Natural killer cell (primary cell): ENCODE measurements at regions of chr5 and their contacts with region 1.

Region 1: DNA sequence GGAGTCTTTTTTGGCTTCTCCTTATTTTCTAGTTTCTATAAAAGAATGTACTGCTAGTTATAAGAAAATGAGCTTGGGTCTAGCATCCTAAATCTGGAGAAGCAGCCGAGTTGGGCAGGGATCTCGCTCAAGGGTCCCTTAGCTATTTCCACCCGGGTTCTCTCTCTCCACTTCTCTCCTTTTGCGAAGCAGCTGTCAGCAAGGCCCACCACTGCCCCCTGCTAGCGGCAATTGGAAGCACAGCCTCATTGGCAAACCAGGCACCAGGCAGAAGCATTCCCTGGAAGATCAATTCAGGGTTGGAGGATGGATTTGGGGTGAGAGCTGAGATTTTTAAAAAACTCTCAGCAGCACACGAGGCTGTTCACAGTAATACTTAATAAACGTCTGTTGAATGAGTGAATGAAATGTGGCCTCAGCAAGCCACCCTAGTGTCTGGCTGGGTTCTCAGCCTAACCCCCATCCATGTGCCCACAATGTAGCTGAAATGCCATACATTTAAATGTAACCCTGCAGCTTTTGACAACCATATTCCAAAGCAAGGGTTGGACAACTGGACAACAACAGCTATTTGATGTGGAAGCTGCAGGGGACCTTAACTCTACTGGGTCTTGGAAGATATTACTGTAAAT is 34.6 kb upstream of the TNIP1 start:
- DNase-seq: peak; percentile 68 to 84
- ATAC-seq: peak; percentile 85 to 98 (median 93)
- H3K4me3 ChIP-seq: no peak overlapping the region
- H3K4me3 Mint-ChIP-seq: no peak overlapping the region
- H3K27ac ChIP-seq: no peak overlapping the region
- H3K27ac Mint-ChIP-seq: peak overlapping the region in 1 of 2 donors; percentile 82
- H3K4me1 ChIP-seq: peaks cover 5% of the 10 kb centered on the region
- H3K4me1 Mint-ChIP-seq: peaks cover 9 to 15% of the 10 kb centered on the region in 2 donors
- H3K27me3 ChIP-seq: no peaks in the 10 kb centered on the region
- H3K27me3 Mint-ChIP-seq: no peaks in the 10 kb centered on the region
- CTCF ChIP-seq: peak; percentile 93

Region 2: DNA sequence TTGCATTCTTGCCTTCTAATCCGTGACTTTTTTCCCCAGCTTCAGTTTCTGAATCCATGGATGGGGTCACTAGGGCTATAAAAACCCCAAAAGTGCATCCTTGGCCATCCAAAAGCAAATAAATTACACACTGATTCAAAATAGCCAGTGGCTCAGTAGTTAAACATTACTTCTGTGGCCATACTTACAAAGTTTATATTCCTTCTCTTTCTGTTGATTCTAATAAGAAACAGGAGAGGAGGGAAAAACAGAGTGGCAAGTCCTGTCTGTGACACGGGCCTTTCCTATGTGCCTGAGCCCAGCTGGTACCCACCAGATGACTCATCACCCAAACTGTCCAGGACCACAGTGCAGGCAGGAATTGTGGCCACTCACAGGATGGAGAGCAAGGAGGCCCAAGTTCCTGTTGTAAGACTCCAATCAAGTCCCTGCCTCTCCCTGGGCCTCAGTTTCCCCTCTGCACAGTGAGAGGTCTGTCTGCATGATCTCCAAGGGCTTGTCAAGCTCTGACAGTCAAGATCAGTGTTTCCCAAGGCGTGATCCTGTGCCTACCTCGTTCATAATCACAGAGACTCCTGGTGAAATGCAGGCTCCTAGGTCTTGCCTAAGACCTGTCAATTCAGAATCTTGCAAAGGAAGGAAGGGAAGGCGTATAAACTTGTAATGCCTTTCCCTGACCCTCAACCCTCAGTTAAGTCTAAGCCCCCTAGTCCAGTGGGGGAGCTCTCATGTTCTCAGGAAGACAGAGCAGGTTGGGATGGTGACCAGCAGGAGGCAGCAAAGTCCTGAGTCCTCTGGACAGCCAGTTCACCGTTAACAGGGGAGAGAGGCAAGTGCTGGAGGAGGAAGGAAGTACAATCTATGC is 64.1 kb before region 1 on chr5:
- intact Hi-C with region 1: loop called (anchors 1 kb)
- DNase-seq: peak; percentile 67 to 86
- ATAC-seq: peak; percentile 83 to 87 (median 84)
- H3K4me3 ChIP-seq: no peak overlapping the region
- H3K4me3 Mint-ChIP-seq: no peak overlapping the region
- H3K27ac ChIP-seq: no peak overlapping the region
- H3K27ac Mint-ChIP-seq: peak overlapping the region; percentile 21 to 70
- H3K4me1 ChIP-seq: peaks cover 8% of the 10 kb centered on the region
- H3K4me1 Mint-ChIP-seq: peaks cover 14 to 18% of the 10 kb centered on the region in 2 donors
- H3K27me3 ChIP-seq: no peaks in the 10 kb centered on the region
- H3K27me3 Mint-ChIP-seq: no peaks in the 10 kb centered on the region
- CTCF ChIP-seq: peak; percentile 84